Sciatic nerve (tissue), 2 donors: ENCODE measurements at regions of chr5 and their contacts with region 1.

Region 1: GRCh38 chr5:10424124-10424731 is 17.5 kb upstream of the ROPN1L start:
- DNase-seq: no peak
- ATAC-seq: peak; percentile 67

Region 2: GRCh38 chr5:10283927-10284635 is 140.1 kb before region 1 on chr5:
- intact Hi-C with region 1: loop called (anchors 10 kb)
- DNase-seq: peak; percentile 92
- ATAC-seq: peak; percentile 95

Region 3: DNA sequence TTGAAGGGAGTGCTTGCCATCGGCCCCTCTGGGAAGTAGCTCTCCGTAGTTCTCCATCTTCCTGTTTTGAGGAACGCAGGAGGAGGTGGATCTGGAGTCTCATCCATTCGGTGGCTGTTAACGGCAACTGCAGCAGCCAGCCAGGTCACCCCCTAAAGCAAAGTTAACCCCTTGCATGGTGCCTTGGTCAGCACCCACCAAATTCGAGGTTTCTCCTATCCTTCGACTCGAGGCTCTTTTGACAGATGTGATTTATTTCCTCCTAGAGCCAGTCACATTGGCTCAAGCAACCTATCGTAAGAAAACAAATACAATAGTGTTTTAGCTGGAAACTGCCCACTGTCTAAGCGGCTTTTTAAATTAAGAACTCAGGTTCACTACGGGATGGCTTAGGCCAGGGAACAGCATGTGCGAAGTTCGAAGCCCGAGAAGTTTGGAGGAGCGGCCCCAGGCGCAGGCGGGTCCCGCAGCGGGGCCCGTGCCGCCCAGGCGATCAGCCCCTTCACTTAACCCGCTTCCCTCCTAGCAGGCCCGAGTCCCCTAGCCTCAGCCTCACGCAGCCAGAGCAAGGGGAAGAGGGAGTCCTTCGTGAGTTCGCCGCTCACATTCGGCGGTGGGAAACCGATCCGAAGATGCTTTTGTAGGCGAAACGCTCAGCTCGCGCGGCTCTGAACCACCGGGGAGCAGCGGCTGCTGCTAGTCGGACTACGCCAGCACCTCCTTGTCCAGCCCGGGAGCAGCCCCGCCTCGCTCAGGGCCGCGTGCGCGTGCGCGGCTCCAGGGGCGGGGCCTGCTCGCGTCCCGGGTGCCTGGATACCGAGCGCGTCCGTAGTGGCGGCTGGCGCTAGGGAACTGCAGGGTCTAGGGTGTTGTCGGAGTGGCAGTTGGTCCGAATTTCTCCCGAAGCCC is 17.1 kb after region 1 on chr5 and contains the start of gene ROPN1L:
- intact Hi-C with region 1: no loop called
- DNase-seq: peak; percentile 91
- ATAC-seq: peak; percentile 99
- total RNA-seq, gene ROPN1L: 0.94 TPM

Region 4: GRCh38 chr5:10563945-10564837 is 140.0 kb after region 1 on chr5 and contains the start of gene ANKRD33B:
- intact Hi-C with region 1: no loop called
- DNase-seq: peak; percentile 84
- ATAC-seq: peak; percentile 41
- total RNA-seq, gene ANKRD33B: 22.6 TPM

Region 5: GRCh38 chr5:11139217-11139865 is 715.1 kb after region 1 on chr5:
- intact Hi-C with region 1: no loop called
- DNase-seq: no peak
- ATAC-seq: no peak